Activated CD4-positive, alpha-beta T cell treated with anti-CD3 and anti-CD28 coated beads for 36 hours (primary cell): ENCODE measurements at regions of chr11 and their contacts with region 1.

Region 1: GRCh38 chr11:68206187-68206601 is 6.9 kb downstream of the KMT5B start:
- DNase-seq: no peak
- ATAC-seq: peak; percentile 62
- H3K4me3 Mint-ChIP-seq: no peak overlapping the region
- H3K27ac Mint-ChIP-seq: peak overlapping the region; percentile 20
- H3K4me1 Mint-ChIP-seq: peaks cover 69% of the 10 kb centered on the region
- H3K27me3 Mint-ChIP-seq: no peaks in the 10 kb centered on the region

Region 2: GRCh38 chr11:67732045-67732787 is 474.0 kb before region 1 on chr11:
- CTCF ChIA-PET with region 1: no interaction called
- POLR2A ChIA-PET with region 1: no interaction called
- intact Hi-C with region 1: no loop called
- DNase-seq: peak; percentile 72
- ATAC-seq: peak; percentile 90
- H3K4me3 Mint-ChIP-seq: no peak overlapping the region
- H3K27ac Mint-ChIP-seq: no peak overlapping the region
- H3K4me1 Mint-ChIP-seq: peaks cover 14% of the 10 kb centered on the region
- H3K27me3 Mint-ChIP-seq: peaks cover 19% of the 10 kb centered on the region

Region 3: DNA sequence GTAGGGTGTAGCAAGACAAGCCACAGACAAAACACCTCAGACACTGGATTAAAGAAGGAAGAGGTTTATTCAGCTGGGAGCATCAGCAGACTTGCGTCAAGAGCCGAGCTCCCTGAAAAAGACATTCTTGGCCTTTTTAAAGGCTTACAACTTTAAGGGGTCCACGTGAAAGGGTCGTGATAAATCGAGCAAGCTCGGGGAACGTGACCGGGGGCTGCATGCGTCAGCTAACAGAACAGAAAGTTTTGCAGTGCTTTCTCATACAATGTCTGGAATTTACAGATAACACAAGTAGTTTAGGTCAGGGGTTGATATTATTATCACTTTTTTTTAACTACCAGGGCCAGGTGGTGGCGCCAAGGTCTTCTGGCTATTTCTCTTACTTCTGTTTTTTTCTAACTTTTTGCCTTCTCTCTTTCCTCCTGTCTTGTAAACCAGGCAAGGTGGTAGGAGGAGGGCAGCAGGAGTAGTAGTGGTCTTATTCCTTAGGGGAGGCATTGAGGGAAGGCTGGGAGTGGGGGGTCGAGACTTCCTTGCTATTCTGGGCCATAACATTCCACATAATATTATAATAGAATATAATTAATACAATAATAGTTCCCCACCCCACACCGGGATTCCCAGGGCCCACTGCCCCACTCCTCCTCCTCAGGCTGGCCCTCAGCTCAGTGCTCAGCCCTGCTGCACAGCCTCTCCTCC is 196.7 kb before region 1 on chr11:
- CTCF ChIA-PET with region 1: no interaction called
- POLR2A ChIA-PET with region 1: no interaction called
- intact Hi-C with region 1: loop called (anchors 2 to 10 kb)
- DNase-seq: peak; percentile 41
- ATAC-seq: no peak
- H3K4me3 Mint-ChIP-seq: no peak overlapping the region
- H3K27ac Mint-ChIP-seq: no peak overlapping the region
- H3K4me1 Mint-ChIP-seq: peaks cover 9% of the 10 kb centered on the region
- H3K27me3 Mint-ChIP-seq: no peaks in the 10 kb centered on the region

Region 4: DNA sequence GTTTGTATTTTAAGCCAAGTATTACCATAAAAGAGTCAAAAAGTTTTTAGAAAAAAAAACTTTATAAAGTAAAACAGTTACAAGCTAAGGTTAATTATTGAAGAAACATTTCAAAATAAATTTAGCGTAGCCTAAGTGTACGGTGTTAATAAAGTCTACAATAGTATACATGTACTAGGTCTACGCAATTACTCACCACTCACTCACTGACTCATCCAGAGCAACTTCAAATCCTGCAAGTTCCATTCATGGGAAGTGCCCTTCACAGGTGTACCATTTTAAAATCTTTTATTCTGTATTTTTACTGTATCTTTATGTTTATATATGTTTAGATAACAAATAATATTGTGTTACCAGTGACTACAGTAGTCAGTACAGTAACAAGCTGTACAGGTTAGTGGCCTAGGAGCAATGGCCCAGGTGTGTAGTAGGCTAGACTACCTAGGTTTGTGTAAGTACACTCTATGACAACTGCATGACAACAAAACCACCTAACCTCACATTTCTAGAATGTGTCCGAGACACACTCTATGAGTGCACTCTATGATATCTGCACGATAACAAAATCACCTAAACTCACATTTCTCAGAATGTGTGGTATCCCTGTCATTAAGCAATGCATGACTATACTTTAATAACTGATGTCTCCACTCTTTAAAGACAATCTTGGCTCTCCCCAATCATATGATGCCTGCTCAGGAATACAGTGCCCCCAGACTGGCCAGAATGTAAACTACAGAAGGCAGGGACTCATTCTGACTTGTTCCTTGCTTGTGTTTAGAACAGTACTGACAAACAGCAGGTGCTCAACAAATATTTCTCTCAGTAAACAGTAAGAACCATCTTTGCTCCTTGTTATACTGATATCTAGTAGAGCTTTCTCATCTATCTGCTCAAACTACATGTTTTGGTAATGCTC is 14.3 kb before region 1 on chr11:
- CTCF ChIA-PET with region 1: interaction called, 27 read pairs
- POLR2A ChIA-PET with region 1: no interaction called
- intact Hi-C with region 1: no loop called
- DNase-seq: no peak
- ATAC-seq: peak; percentile 80
- H3K4me3 Mint-ChIP-seq: no peak overlapping the region
- H3K27ac Mint-ChIP-seq: peak overlapping the region; percentile 64
- H3K4me1 Mint-ChIP-seq: peaks cover 49% of the 10 kb centered on the region
- H3K27me3 Mint-ChIP-seq: no peaks in the 10 kb centered on the region